SK-N-SH (cell line): ENCODE measurements at regions of chr11 and their contacts with region 1.

Region 1: GRCh38 chr11:124758317-124759203 is 3.5 kb downstream of the ESAM start:
- DNase-seq: peak; percentile 89
- H3K4me3 ChIP-seq: no peak overlapping the region; a peak in 2 of 4 replicates
- H3K27ac ChIP-seq: no peak overlapping the region
- H3K4me1 ChIP-seq: peaks cover 0 to 13% of the 10 kb centered on the region in 2 experiments; a peak in 2 of 4 replicates
- H3K27me3 ChIP-seq: no peaks in the 10 kb centered on the region
- CTCF ChIP-seq: peak; percentile 51
- EP300 ChIP-seq: no peak
- RAD21 ChIP-seq: peak; percentile 47

Region 2: GRCh38 chr11:124644426-124645280 is 113.9 kb before region 1 on chr11:
- CTCF ChIA-PET with region 1: interaction called, 40 read pairs
- POLR2A ChIA-PET with region 1: no interaction called
- DNase-seq: peak; percentile 75
- H3K4me3 ChIP-seq: peak overlapping the region; percentile 4 to 42; a peak in 2 of 4 replicates
- H3K27ac ChIP-seq: peak overlapping the region in 1 of 2 experiments; percentile 86; a peak in 2 of 4 replicates
- H3K4me1 ChIP-seq: peaks cover 3 to 7% of the 10 kb centered on the region in 2 experiments; a peak in 1 of 4 replicates
- H3K27me3 ChIP-seq: no peaks in the 10 kb centered on the region
- CTCF ChIP-seq: peak; percentile 84
- EP300 ChIP-seq: no peak
- RAD21 ChIP-seq: peak; percentile 82

Region 3: GRCh38 chr11:124673333-124674167 is 85.0 kb before region 1 on chr11 and contains the starts of genes SIAE and SPA17:
- CTCF ChIA-PET with region 1: interaction called, 62 read pairs
- POLR2A ChIA-PET with region 1: interaction called, 4 read pairs
- DNase-seq: peak; percentile 97
- H3K4me3 ChIP-seq: peak within 1 kb of the TSS; percentile 87 to 89
- H3K27ac ChIP-seq: peak within 1 kb of the TSS; percentile 87 to 88
- H3K4me1 ChIP-seq: peaks cover 0 to 11% of the 10 kb centered on the region in 2 experiments; a peak in 1 of 4 replicates
- H3K27me3 ChIP-seq: no peaks in the 10 kb centered on the region
- CTCF ChIP-seq: no peak
- EP300 ChIP-seq: peak in 1 of 2 experiments; percentile 48; a peak in 1 of 4 replicates
- RAD21 ChIP-seq: no peak
- polyA plus RNA-seq, gene SIAE: 27.9 and 47.0 TPM in 2 replicates
- polyA plus RNA-seq, gene SPA17: 7.7 and 11.7 TPM in 2 replicates

Region 4: DNA sequence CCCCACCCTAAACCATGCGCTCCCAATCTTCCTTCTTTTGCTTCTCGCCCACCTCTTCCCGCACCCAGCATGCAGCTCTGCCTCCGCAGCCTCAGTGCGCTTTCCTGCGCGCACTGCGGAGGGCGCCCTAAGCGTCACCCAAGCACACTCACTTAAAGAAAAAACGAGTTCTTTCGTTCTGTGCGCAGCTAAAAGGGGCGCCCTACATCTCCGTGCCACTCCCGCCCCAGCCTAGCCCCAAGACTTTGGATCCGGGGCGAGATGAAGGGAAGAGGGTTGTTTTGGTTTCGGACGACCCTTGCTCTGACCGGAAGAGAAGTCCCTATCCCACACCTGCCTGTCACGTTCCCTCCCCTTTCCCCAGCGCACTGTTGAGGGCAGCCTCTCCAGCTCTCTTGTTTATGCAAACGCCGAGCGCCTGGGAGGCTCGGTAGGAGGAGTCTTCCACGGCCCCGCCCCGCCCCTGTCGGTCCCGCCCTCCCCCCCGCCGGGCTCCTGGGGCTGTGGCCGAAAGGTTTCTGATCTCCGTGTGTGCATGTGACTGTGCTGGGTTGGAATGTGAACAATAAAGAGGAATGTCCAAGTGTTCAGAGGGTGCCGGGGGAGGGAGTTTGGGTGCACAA is 11.8 kb before region 1 on chr11:
- CTCF ChIA-PET with region 1: interaction called, 31 read pairs
- POLR2A ChIA-PET with region 1: no interaction called
- DNase-seq: peak; percentile 74
- H3K4me3 ChIP-seq: peak overlapping the region in 1 of 2 experiments; percentile 3; a peak in 1 of 4 replicates
- H3K27ac ChIP-seq: no peak overlapping the region
- H3K4me1 ChIP-seq: no peaks in the 10 kb centered on the region
- H3K27me3 ChIP-seq: no peaks in the 10 kb centered on the region
- CTCF ChIP-seq: no peak
- EP300 ChIP-seq: no peak
- RAD21 ChIP-seq: no peak

Region 5: DNA sequence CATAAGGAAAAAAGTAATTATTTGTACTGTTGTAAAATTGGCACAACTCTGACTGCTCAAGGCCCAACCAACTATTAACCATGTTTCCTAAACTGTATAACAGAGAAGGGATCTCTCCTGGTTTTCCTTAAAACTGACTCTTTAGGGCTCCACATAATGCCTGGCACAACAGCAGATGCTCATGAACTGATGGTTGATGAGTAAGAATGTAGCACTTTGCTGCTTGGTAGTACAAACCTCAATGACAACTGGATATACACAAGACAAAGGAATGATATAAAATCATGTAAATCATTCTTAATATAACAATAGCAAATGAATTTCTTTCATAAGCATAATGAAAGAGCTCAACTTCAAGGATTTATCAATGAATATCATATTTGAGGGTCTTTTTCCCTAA is 30.0 kb after region 1 on chr11:
- CTCF ChIA-PET with region 1: interaction called, 53 read pairs
- POLR2A ChIA-PET with region 1: no interaction called
- DNase-seq: no peak
- H3K4me3 ChIP-seq: no peak overlapping the region
- H3K27ac ChIP-seq: no peak overlapping the region
- H3K4me1 ChIP-seq: peaks cover 5 to 11% of the 10 kb centered on the region in 2 experiments; a peak in 3 of 4 replicates
- H3K27me3 ChIP-seq: no peaks in the 10 kb centered on the region
- CTCF ChIP-seq: no peak
- EP300 ChIP-seq: no peak
- RAD21 ChIP-seq: no peak

Region 6: GRCh38 chr11:124800226-124800929 is 41.8 kb after region 1 on chr11 and contains the start of gene MSANTD2:
- CTCF ChIA-PET with region 1: interaction called, 53 read pairs
- POLR2A ChIA-PET with region 1: interaction called, 3 read pairs
- DNase-seq: peak; percentile 93
- H3K4me3 ChIP-seq: peak within 1 kb of the TSS; percentile 68 to 70
- H3K27ac ChIP-seq: peak within 1 kb of the TSS; percentile 95 to 97
- H3K4me1 ChIP-seq: peaks cover 8 to 10% of the 10 kb centered on the region in 2 experiments; a peak in 3 of 4 replicates
- H3K27me3 ChIP-seq: no peaks in the 10 kb centered on the region
- CTCF ChIP-seq: no peak
- EP300 ChIP-seq: 0 out of 4 replicates have a peak, but pooled peaks of 1 of the 2 experiments have one; percentile 8
- RAD21 ChIP-seq: 0 out of 2 replicates have a peak, but pooled peaks have one; percentile 2
- polyA plus RNA-seq, gene MSANTD2: 6.4 and 8.5 TPM in 2 replicates

Region 7: GRCh38 chr11:124837491-124837856 is 78.9 kb after region 1 on chr11:
- CTCF ChIA-PET with region 1: interaction called, 12 read pairs
- POLR2A ChIA-PET with region 1: no interaction called
- DNase-seq: peak; percentile 70
- H3K4me3 ChIP-seq: peak overlapping the region in 1 of 2 experiments; percentile 52; a peak in 2 of 4 replicates
- H3K27ac ChIP-seq: peak overlapping the region in 1 of 2 experiments; percentile 54; a peak in 1 of 4 replicates
- H3K4me1 ChIP-seq: peaks cover 3 to 4% of the 10 kb centered on the region in 2 experiments; a peak in 2 of 4 replicates
- H3K27me3 ChIP-seq: peaks cover 1% of the 10 kb centered on the region
- CTCF ChIP-seq: peak; percentile 60
- EP300 ChIP-seq: no peak
- RAD21 ChIP-seq: peak; percentile 77